Activated T-helper 1 cell treated with anti-CD3 and anti-CD28 coated beads, Interleukin-12 subunit alpha, Interleukin-12 subunit beta, Interleukin-2, Interleukin-4 antibody, amounts not matched to agents 30 ng/mL and 10 ng/mL and 1 ng/mL, durations not matched to agents 14 hours and 24 hours and 36 hours (primary cell): ENCODE measurements at regions of chr11 and their contacts with region 1.

Region 1: GRCh38 chr11:95231127-95231880 is at the start of gene SESN3:
- DNase-seq: peak; percentile 98
- H3K4me3 Mint-ChIP-seq: peak within 1 kb of the TSS; percentile 96
- H3K27ac Mint-ChIP-seq: peak within 1 kb of the TSS; percentile 88
- H3K4me1 Mint-ChIP-seq: peaks cover 18% of the 10 kb centered on the region
- H3K27me3 Mint-ChIP-seq: peaks cover 2% of the 10 kb centered on the region
- total RNA-seq, gene SESN3: 62.0 and 68.6 TPM in 2 replicates

Region 2: GRCh38 chr11:93933230-93933629 is 1298.1 kb before region 1 on chr11:
- intact Hi-C with region 1: no loop called
- DNase-seq: no peak
- H3K4me3 Mint-ChIP-seq: no peak overlapping the region
- H3K27ac Mint-ChIP-seq: no peak overlapping the region
- H3K4me1 Mint-ChIP-seq: no peaks in the 10 kb centered on the region
- H3K27me3 Mint-ChIP-seq: peaks cover 5% of the 10 kb centered on the region

Region 3: DNA sequence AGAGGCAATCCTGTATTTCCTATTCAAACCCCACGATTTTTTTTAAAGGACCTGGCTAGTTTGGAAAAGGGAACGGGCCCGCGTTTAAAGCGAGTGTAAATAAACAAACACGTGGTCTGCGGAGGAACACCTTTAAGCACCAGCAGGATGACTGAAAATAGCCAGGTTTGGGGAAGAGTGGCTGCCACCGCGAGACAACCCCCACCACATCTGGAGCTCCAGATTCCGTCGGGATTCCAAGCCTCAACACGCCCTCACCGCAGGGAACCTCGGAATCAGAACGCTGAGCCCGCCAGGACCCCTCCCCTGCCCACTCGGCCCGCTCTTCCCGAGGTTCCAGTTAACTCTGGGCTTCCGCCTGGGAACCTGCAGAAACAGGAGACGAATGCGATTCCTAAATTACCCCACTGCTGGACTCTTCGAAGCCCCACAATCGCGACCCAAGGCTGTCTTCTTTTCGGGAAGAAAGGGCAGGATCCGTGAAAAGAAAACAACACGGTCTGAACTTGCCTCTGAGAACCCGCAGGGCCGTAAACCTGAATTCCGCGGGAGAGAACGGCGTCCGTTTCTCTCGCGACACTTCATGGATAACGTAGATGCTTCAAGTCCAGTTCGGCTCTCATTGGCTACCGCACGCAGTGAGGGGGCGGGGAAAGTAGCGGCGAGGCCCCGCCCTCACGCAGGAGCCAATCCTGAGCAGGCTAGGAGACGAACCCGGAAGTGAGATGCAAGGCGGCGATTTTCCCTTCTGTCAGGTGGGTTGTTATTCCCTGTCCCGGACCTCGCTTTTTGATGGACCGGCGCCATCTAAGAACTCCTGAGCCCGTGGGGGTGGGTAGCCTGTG is 737.8 kb before region 1 on chr11 and contains the starts of genes ANKRD49 and MRE11:
- intact Hi-C with region 1: loop called (anchors 2 kb)
- DNase-seq: peak; percentile 96
- H3K4me3 Mint-ChIP-seq: peak within 1 kb of the TSS; percentile 94
- H3K27ac Mint-ChIP-seq: peak within 1 kb of the TSS; percentile 92
- H3K4me1 Mint-ChIP-seq: peaks cover 36% of the 10 kb centered on the region
- H3K27me3 Mint-ChIP-seq: no peaks in the 10 kb centered on the region
- total RNA-seq, gene ANKRD49: 20.0 and 21.2 TPM in 2 replicates
- total RNA-seq, gene MRE11: 43.8 and 45.9 TPM in 2 replicates

Region 4: GRCh38 chr11:95150946-95151684 is 80.2 kb before region 1 on chr11:
- intact Hi-C with region 1: loop called (anchors 1 kb)
- DNase-seq: peak; percentile 87
- H3K4me3 Mint-ChIP-seq: peak overlapping the region; percentile 87
- H3K27ac Mint-ChIP-seq: peak overlapping the region; percentile 78
- H3K4me1 Mint-ChIP-seq: peaks cover 46% of the 10 kb centered on the region
- H3K27me3 Mint-ChIP-seq: peaks cover 6% of the 10 kb centered on the region

Region 5: DNA sequence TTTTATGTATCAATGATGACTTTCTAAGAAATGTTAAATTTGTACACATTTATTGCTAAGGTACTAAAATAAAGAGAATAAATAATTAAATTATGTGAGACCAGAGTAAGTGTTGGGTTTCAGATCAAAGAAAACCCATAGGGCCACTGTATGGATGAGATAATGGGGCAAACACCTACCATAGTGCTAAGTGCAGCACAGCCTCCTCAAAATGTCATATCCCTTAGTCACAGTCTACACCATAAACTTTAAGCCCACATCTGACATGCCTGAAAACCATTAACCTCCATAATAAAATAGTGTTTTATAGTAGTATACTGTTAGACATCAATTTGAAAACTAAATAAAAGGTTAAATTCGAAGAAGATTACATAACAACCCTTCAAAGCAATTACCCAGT is 37.8 kb before region 1 on chr11:
- intact Hi-C with region 1: no loop called
- DNase-seq: no peak
- H3K4me3 Mint-ChIP-seq: no peak overlapping the region
- H3K27ac Mint-ChIP-seq: no peak overlapping the region
- H3K4me1 Mint-ChIP-seq: no peaks in the 10 kb centered on the region
- H3K27me3 Mint-ChIP-seq: no peaks in the 10 kb centered on the region

Region 6: DNA sequence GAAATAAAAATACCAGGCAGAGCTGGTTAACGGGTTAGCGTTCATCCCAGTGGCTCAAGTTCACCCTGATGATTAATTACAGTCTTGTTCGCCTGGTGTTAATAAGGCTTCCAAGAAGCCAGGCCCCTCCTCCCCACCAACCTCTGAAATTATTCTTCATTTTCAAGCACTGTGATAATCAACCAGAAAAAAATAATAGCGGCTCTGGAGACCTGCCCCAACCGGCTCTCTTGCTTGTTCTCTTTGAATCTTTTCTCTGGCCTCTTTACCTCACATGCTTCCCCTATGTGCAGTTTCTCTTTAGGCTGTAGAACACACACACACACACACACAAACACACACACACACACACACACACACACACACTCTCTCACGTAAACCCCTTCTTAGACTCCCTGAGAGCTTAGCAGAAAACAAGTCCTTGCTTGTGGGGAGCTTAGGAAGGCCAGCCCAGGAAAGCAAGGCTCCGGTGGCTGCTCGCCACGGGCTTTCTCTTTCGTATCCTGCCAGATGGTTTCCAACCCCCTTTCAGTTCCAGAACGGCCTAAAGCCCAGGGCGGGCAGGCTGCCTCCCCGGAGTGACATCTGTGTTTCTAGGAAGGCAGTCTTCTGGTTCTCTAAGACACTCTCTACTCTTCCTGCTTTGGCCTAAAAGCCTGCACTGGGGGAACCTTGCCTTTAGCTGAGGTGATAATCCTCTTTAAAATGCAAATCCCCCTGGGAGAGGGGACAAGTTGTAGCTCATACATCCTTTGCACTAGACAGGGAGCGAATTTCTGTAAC is 106.1 kb after region 1 on chr11:
- intact Hi-C with region 1: loop called (anchors 1 kb)
- DNase-seq: peak; percentile 41
- H3K4me3 Mint-ChIP-seq: no peak overlapping the region
- H3K27ac Mint-ChIP-seq: no peak overlapping the region
- H3K4me1 Mint-ChIP-seq: no peaks in the 10 kb centered on the region
- H3K27me3 Mint-ChIP-seq: peaks cover 8% of the 10 kb centered on the region

Region 7: DNA sequence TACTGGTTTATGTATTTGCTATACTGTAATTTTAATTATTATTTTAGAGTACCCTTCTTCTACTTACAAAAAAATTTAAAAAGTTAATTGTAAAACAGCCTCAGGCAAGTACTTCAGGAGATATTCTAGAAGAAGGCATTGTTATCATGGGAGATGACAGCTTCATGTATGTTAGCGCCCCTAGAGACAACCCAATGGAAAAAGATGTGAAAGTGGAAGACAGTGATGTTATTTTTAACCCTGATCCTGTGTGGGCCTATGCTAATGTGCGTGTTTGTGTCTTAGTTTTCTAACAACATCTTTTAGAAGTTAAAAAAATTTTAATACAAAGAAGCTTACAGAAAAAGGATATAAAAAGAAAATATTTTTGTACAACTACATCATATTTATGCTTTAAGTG is 353.3 kb after region 1 on chr11:
- intact Hi-C with region 1: no loop called
- DNase-seq: no peak
- H3K4me3 Mint-ChIP-seq: no peak overlapping the region
- H3K27ac Mint-ChIP-seq: peak overlapping the region; percentile 10
- H3K4me1 Mint-ChIP-seq: peaks cover 34% of the 10 kb centered on the region
- H3K27me3 Mint-ChIP-seq: no peaks in the 10 kb centered on the region

Region 8: GRCh38 chr11:95715777-95716241 is 484.5 kb after region 1 on chr11:
- intact Hi-C with region 1: loop called (anchors 1 kb)
- DNase-seq: no peak
- H3K4me3 Mint-ChIP-seq: peak overlapping the region; percentile 54
- H3K27ac Mint-ChIP-seq: peak overlapping the region; percentile 82
- H3K4me1 Mint-ChIP-seq: peaks cover 63% of the 10 kb centered on the region
- H3K27me3 Mint-ChIP-seq: no peaks in the 10 kb centered on the region